Activated CD4-positive, alpha-beta T cell treated with anti-CD3 and anti-CD28 coated beads for 36 hours (primary cell): ENCODE measurements at regions of chr1 and their contacts with region 1.

Region 1: GRCh38 chr1:8604041-8604945 is 213.1 kb downstream of the RERE start:
- DNase-seq: peak; percentile 70
- ATAC-seq: peak; percentile 89
- H3K4me3 Mint-ChIP-seq: peak overlapping the region; percentile 66
- H3K27ac Mint-ChIP-seq: peak overlapping the region; percentile 94
- H3K4me1 Mint-ChIP-seq: peaks cover 56% of the 10 kb centered on the region
- H3K27me3 Mint-ChIP-seq: no peaks in the 10 kb centered on the region

Region 2: DNA sequence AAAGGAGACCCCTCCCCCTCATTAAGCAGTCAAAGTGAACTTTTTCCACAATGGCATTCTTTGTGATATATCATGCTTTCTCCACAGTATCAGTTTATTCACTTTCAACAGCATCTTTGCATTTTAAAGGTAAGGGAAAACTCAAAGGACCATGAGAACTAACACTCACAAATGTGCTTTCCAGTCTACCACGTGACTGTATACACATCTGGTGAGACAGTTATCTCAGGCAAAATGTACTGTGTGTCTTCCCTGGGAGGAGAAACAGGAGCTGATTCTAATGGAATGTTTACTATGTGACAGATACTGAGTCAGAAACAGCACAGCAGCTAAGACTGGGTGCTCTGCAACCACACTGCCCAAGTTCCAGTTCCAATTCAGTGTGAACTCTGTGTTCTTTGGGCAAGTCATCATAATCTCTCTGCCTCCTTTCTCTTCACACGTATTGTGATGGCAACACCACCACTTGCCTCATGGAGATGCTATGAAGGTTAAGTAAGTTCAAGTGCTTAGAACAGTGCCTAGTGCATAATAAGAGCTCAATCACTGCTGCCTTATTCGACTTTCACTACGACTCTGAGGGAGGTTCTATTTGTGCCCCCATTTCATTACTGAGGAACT is 207.4 kb before region 1 on chr1:
- CTCF ChIA-PET with region 1: no interaction called
- POLR2A ChIA-PET with region 1: no interaction called
- intact Hi-C with region 1: loop called in 1 of 2 experiments (anchors 1 kb)
- DNase-seq: peak; percentile 68
- ATAC-seq: peak; percentile 84
- H3K4me3 Mint-ChIP-seq: peak overlapping the region; percentile 25
- H3K27ac Mint-ChIP-seq: peak overlapping the region; percentile 81
- H3K4me1 Mint-ChIP-seq: peaks cover 72% of the 10 kb centered on the region
- H3K27me3 Mint-ChIP-seq: no peaks in the 10 kb centered on the region

Region 3: DNA sequence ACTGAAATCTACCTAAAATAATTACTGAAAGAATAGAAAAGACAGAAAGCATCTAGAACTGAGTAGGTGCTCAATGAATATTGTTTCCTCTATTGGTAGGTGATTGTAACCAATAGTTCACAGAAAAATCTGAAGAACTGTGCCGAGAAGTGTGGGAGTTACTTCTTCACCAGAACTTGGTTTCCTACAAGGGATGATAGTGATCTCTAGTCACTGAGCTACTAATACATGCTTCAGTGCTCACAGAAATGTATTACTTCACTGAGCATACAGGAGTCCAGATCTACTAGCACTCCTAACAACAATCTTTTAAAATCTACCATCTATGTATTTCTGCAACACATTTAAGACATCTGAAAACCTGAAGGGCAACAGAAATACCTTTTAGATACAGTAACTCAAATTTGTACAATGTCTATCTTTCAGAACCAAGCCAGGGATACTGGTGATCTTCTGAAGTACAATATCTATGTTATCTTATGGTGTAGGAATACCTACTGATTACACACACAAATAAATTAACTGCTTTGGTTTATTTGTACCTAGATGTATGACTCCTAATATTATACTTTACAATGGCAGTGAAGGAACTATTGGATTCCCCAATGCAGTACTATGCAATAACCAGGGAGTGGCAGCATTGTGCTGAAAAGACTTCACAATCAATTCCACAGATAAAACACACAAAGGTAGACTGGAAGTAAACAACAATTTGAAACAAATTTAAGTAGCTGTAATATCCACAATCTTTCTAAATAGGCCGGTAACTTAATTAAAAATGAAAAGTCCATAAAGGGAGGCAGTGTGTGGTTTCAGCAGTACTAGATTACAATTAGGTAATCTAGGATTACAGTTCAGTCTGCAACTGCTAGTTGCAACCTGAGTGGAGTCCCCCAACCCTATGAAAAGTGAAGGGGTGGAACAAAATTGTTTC is 43.4 kb before region 1 on chr1:
- CTCF ChIA-PET with region 1: interaction called, 16 read pairs
- POLR2A ChIA-PET with region 1: interaction called, 3 read pairs
- intact Hi-C with region 1: loop called (anchors 1 to 5 kb)
- DNase-seq: peak; percentile 34
- ATAC-seq: peak; percentile 80
- H3K4me3 Mint-ChIP-seq: no peak overlapping the region
- H3K27ac Mint-ChIP-seq: peak overlapping the region; percentile 56
- H3K4me1 Mint-ChIP-seq: peaks cover 49% of the 10 kb centered on the region
- H3K27me3 Mint-ChIP-seq: no peaks in the 10 kb centered on the region

Region 4: DNA sequence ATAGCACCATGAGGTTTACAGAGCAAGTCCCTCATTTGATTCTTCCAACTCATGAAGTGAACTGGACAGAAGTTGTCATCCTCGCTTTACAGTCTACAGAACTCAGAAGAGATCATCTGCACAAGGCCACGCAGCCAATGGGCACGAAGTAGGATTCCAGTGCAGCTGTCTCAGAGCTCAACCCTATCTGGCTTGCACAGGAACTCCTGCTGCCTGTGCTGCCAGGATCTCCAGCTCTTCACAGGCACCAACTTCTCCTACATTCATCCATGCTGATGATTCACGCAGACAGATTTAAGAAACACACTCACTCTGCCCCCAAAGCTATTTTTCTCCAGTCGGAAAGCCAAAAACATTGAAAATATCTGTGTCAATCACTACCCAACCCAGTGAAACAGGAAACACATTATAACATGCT is 56.1 kb after region 1 on chr1:
- CTCF ChIA-PET with region 1: interaction called, 3 read pairs
- POLR2A ChIA-PET with region 1: interaction called, 3 read pairs
- intact Hi-C with region 1: loop called (anchors 5 kb)
- DNase-seq: peak; percentile 24
- ATAC-seq: no peak
- H3K4me3 Mint-ChIP-seq: no peak overlapping the region
- H3K27ac Mint-ChIP-seq: no peak overlapping the region
- H3K4me1 Mint-ChIP-seq: peaks cover 4% of the 10 kb centered on the region
- H3K27me3 Mint-ChIP-seq: no peaks in the 10 kb centered on the region

Region 5: GRCh38 chr1:8687039-8687438 is 82.7 kb after region 1 on chr1:
- CTCF ChIA-PET with region 1: no interaction called
- POLR2A ChIA-PET with region 1: no interaction called
- intact Hi-C with region 1: no loop called
- DNase-seq: peak; percentile 21
- ATAC-seq: no peak
- H3K4me3 Mint-ChIP-seq: no peak overlapping the region
- H3K27ac Mint-ChIP-seq: no peak overlapping the region
- H3K4me1 Mint-ChIP-seq: peaks cover 29% of the 10 kb centered on the region
- H3K27me3 Mint-ChIP-seq: no peaks in the 10 kb centered on the region

Region 6: GRCh38 chr1:8817406-8818324 is 213.4 kb after region 1 on chr1 and contains the start of gene RERE:
- CTCF ChIA-PET with region 1: no interaction called
- POLR2A ChIA-PET with region 1: no interaction called
- intact Hi-C with region 1: loop called in 1 of 2 experiments (anchors 1 kb)
- DNase-seq: peak; percentile 97
- ATAC-seq: peak; percentile 95
- H3K4me3 Mint-ChIP-seq: peak within 1 kb of the TSS; percentile 77
- H3K27ac Mint-ChIP-seq: peak within 1 kb of the TSS; percentile 96
- H3K4me1 Mint-ChIP-seq: peaks cover 44% of the 10 kb centered on the region
- H3K27me3 Mint-ChIP-seq: peaks cover 2% of the 10 kb centered on the region
- total RNA-seq, gene RERE: 57.4 to 71.6 TPM